WTC11 (cell line): ENCODE measurements at regions of chr7 and their contacts with region 1.

Region 1: GRCh38 chr7:30740424-30741181 is 11.3 kb upstream of the INMT start:
- DNase-seq: peak; percentile 88
- ATAC-seq: peak; percentile 86
- H3K4me3 Mint-ChIP-seq: no peak overlapping the region
- H3K27ac Mint-ChIP-seq: no peak overlapping the region
- H3K4me1 Mint-ChIP-seq: no peaks in the 10 kb centered on the region
- H3K27me3 Mint-ChIP-seq: no peaks in the 10 kb centered on the region; the same call in 1 of the 2 replicates
- CTCF ChIP-seq: peak; percentile 97

Region 2: GRCh38 chr7:30663397-30663796 is 77.2 kb before region 1 on chr7:
- CTCF ChIA-PET with region 1: interaction called, 14 read pairs
- POLR2A ChIA-PET with region 1: no interaction called
- DNase-seq: no peak
- ATAC-seq: peak; percentile 37; the same call in 1 of the 2 replicates
- H3K4me3 Mint-ChIP-seq: no peak overlapping the region
- H3K27ac Mint-ChIP-seq: no peak overlapping the region
- H3K4me1 Mint-ChIP-seq: peaks cover 5% of the 10 kb centered on the region; the same call in 1 of the 2 replicates
- H3K27me3 Mint-ChIP-seq: no peaks in the 10 kb centered on the region
- CTCF ChIP-seq: no peak

Region 3: GRCh38 chr7:30702200-30702599 is 38.4 kb before region 1 on chr7:
- CTCF ChIA-PET with region 1: interaction called, 35 read pairs
- POLR2A ChIA-PET with region 1: no interaction called
- DNase-seq: no peak
- ATAC-seq: peak; percentile 13; the same call in 1 of the 2 replicates
- H3K4me3 Mint-ChIP-seq: no peak overlapping the region
- H3K27ac Mint-ChIP-seq: no peak overlapping the region
- H3K4me1 Mint-ChIP-seq: peaks cover 22% of the 10 kb centered on the region
- H3K27me3 Mint-ChIP-seq: peaks cover 5% of the 10 kb centered on the region
- CTCF ChIP-seq: 0 out of 2 replicates have a peak, but pooled peaks have one; percentile 22

Region 4: GRCh38 chr7:30778214-30779025 is 37.8 kb after region 1 on chr7:
- CTCF ChIA-PET with region 1: no interaction called
- POLR2A ChIA-PET with region 1: no interaction called
- DNase-seq: no peak
- ATAC-seq: no peak
- H3K4me3 Mint-ChIP-seq: no peak overlapping the region
- H3K27ac Mint-ChIP-seq: no peak overlapping the region
- H3K4me1 Mint-ChIP-seq: no peaks in the 10 kb centered on the region
- H3K27me3 Mint-ChIP-seq: no peaks in the 10 kb centered on the region
- CTCF ChIP-seq: no peak

Region 5: GRCh38 chr7:30791114-30791779 is 50.6 kb after region 1 on chr7:
- CTCF ChIA-PET with region 1: interaction called, 16 read pairs
- POLR2A ChIA-PET with region 1: no interaction called
- DNase-seq: peak; percentile 52
- ATAC-seq: peak; percentile 81
- H3K4me3 Mint-ChIP-seq: no peak overlapping the region
- H3K27ac Mint-ChIP-seq: no peak overlapping the region
- H3K4me1 Mint-ChIP-seq: peaks cover 7% of the 10 kb centered on the region; the same call in 1 of the 2 replicates
- H3K27me3 Mint-ChIP-seq: no peaks in the 10 kb centered on the region
- CTCF ChIP-seq: no peak